B cell (primary cell): ENCODE measurements at regions of chr13 and their contacts with region 1.

Region 1: GRCh38 chr13:23810685-23811240 is 78.4 kb downstream of the MIPEP start:
- DNase-seq: peak; percentile 67
- ATAC-seq: peak; percentile 56
- H3K4me3 ChIP-seq: no peak overlapping the region
- H3K4me3 Mint-ChIP-seq: peak overlapping the region; percentile 23
- H3K27ac ChIP-seq: peak overlapping the region in 1 of 2 donors; percentile 50
- H3K27ac Mint-ChIP-seq: peak overlapping the region; percentile 43
- H3K4me1 ChIP-seq: peaks cover 54 to 59% of the 10 kb centered on the region in 2 donors
- H3K4me1 Mint-ChIP-seq: peaks cover 43% of the 10 kb centered on the region
- H3K27me3 ChIP-seq: peaks cover 0 to 2% (median 0%) of the 10 kb centered on the region in 4 experiments
- H3K27me3 Mint-ChIP-seq: no peaks in the 10 kb centered on the region
- CTCF ChIP-seq: peak; percentile 79

Region 2: DNA sequence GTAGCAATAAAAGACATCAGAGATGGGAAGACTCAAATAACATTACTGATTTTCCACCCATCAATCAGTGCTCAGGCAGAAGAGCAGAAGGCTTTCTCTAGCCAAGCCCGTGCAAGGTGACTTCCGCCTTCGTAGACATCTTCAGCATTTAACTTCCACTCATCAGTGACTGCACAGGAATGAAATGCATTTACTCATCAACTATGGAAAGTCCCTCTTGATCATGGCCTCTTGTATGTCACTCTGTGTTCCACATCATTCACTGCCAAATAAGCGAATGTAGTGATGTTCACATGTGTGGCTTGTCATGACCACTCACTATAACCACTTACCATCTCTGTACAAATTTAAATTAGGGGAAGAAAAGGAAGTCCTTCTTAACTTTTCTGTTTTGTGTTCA is 426.7 kb before region 1 on chr13:
- CTCF ChIA-PET with region 1: no interaction called
- POLR2A ChIA-PET with region 1: no interaction called
- intact Hi-C with region 1: loop called (anchors 1 kb)
- DNase-seq: peak; percentile 92
- ATAC-seq: peak; percentile 98
- H3K4me3 ChIP-seq: no peak overlapping the region
- H3K4me3 Mint-ChIP-seq: peak overlapping the region; percentile 40
- H3K27ac ChIP-seq: peak overlapping the region; percentile 37 to 68
- H3K27ac Mint-ChIP-seq: peak overlapping the region; percentile 76
- H3K4me1 ChIP-seq: peaks cover 30% of the 10 kb centered on the region in 2 donors
- H3K4me1 Mint-ChIP-seq: peaks cover 31% of the 10 kb centered on the region
- H3K27me3 ChIP-seq: peaks cover 0 to 4% (median 0%) of the 10 kb centered on the region in 4 experiments
- H3K27me3 Mint-ChIP-seq: peaks cover 4% of the 10 kb centered on the region
- CTCF ChIP-seq: no peak

Region 3: DNA sequence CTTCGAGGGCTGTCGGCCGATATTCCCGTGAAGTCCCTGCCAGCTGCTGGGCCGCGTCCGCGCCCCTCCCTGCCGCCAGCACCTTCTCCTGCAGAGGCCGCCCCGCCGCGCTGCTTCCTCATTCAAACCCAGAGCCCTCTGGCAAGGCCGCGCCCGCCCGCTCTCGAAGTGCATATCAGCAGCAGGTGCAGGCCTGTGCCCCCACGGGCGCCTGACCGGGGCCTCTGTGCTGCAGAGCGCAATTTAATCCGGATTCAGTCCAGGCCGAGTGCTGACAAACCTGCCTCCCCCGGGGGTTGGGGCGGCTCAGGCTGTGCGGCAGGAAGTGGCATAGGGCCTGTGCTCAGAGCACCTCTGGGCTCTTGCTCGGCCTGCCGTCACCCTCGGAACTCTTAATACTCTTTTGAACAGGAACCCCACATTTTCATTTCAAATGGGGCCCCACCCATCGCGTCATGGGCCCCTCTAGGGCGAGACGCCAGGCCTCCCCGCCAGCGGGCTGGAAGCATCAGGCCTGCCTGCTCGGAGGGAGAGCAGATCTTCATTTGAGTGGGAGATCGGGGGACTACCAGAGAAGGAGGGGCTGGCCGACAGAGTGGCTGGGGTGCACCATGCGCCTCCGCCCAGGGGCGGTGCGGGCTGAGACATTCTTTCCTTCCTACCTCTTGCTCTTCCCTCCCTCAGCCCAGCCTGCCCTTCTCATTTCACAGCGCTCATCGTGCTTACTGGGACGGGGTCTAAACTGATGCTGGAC is 114.9 kb before region 1 on chr13:
- CTCF ChIA-PET with region 1: no interaction called
- POLR2A ChIA-PET with region 1: no interaction called
- intact Hi-C with region 1: loop called (anchors 1 kb)
- DNase-seq: peak; percentile 77
- ATAC-seq: peak; percentile 96
- H3K4me3 ChIP-seq: peak overlapping the region in 4 of 5 experiments; percentile 24 to 53 (median 45)
- H3K4me3 Mint-ChIP-seq: peak overlapping the region; percentile 89
- H3K27ac ChIP-seq: peak overlapping the region; percentile 78 to 83
- H3K27ac Mint-ChIP-seq: peak overlapping the region; percentile 98
- H3K4me1 ChIP-seq: peaks cover 9 to 21% of the 10 kb centered on the region in 2 donors
- H3K4me1 Mint-ChIP-seq: peaks cover 19% of the 10 kb centered on the region
- H3K27me3 ChIP-seq: no peaks in the 10 kb centered on the region
- H3K27me3 Mint-ChIP-seq: no peaks in the 10 kb centered on the region
- CTCF ChIP-seq: no peak

Region 4: GRCh38 chr13:23776698-23777574 is 33.8 kb before region 1 on chr13:
- CTCF ChIA-PET with region 1: interaction called, 3 read pairs
- POLR2A ChIA-PET with region 1: no interaction called
- intact Hi-C with region 1: loop called (anchors 1 kb)
- DNase-seq: peak; percentile 64
- ATAC-seq: peak; percentile 97
- H3K4me3 ChIP-seq: peak overlapping the region in 1 of 5 experiments; percentile 17
- H3K4me3 Mint-ChIP-seq: peak overlapping the region; percentile 13
- H3K27ac ChIP-seq: no peak overlapping the region
- H3K27ac Mint-ChIP-seq: peak overlapping the region; percentile 3
- H3K4me1 ChIP-seq: peaks cover 14 to 36% of the 10 kb centered on the region in 2 donors
- H3K4me1 Mint-ChIP-seq: peaks cover 33% of the 10 kb centered on the region
- H3K27me3 ChIP-seq: peaks cover 0 to 37% (median 33%) of the 10 kb centered on the region in 4 experiments
- H3K27me3 Mint-ChIP-seq: peaks cover 57% of the 10 kb centered on the region
- CTCF ChIP-seq: no peak

Region 5: DNA sequence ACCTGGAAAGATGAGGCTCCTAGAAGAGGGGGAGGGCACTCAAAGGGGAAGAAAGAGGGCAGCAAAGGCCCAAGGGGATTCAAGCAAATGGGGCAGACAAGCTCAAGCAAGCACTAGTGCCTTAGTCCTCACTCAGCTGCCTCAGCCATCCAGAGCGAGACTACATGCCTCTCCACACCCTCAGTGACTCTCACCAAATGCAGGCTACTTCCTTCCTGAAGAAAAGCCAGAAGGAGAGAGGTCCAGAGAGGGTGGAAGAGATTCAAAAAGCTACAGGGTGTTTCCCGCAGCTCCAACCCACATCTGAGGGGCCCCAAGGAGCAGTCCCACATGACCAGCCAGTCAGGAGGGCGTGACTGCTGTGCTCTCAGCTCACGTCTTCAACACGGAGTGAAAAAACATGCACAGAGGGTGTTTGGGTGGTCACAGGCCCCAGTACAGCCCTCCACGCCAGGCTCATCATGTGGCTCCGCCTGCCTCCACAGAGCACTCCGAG is 37.9 kb after region 1 on chr13:
- CTCF ChIA-PET with region 1: interaction called, 21 read pairs
- POLR2A ChIA-PET with region 1: no interaction called
- intact Hi-C with region 1: loop called (anchors 2 kb)
- DNase-seq: peak; percentile 56
- ATAC-seq: peak; percentile 88
- H3K4me3 ChIP-seq: peak overlapping the region in 1 of 5 experiments; percentile 12
- H3K4me3 Mint-ChIP-seq: peak overlapping the region; percentile 50
- H3K27ac ChIP-seq: peak overlapping the region in 1 of 2 donors; percentile 36
- H3K27ac Mint-ChIP-seq: no peak overlapping the region
- H3K4me1 ChIP-seq: peaks cover 45 to 48% of the 10 kb centered on the region in 2 donors
- H3K4me1 Mint-ChIP-seq: peaks cover 50% of the 10 kb centered on the region
- H3K27me3 ChIP-seq: no peaks in the 10 kb centered on the region
- H3K27me3 Mint-ChIP-seq: no peaks in the 10 kb centered on the region
- CTCF ChIP-seq: no peak

Region 6: GRCh38 chr13:23888658-23889614 is 78.2 kb after region 1 on chr13 and contains the start of gene MIPEP:
- CTCF ChIA-PET with region 1: interaction called, 8 read pairs
- POLR2A ChIA-PET with region 1: no interaction called
- intact Hi-C with region 1: loop called (anchors 1 kb)
- DNase-seq: peak; percentile 92
- ATAC-seq: peak; percentile 93
- H3K4me3 ChIP-seq: peak within 1 kb of the TSS; percentile 24 to 96 (median 80)
- H3K4me3 Mint-ChIP-seq: peak within 1 kb of the TSS; percentile 94
- H3K27ac ChIP-seq: peak within 1 kb of the TSS; percentile 42 to 86
- H3K27ac Mint-ChIP-seq: peak within 1 kb of the TSS; percentile 95
- H3K4me1 ChIP-seq: peaks cover 12 to 17% of the 10 kb centered on the region in 2 donors
- H3K4me1 Mint-ChIP-seq: peaks cover 23% of the 10 kb centered on the region
- H3K27me3 ChIP-seq: no peaks in the 10 kb centered on the region
- H3K27me3 Mint-ChIP-seq: no peaks in the 10 kb centered on the region
- CTCF ChIP-seq: peak; percentile 69
- total RNA-seq, gene MIPEP: 15.7 and 16.9 TPM in 2 replicates

Region 7: DNA sequence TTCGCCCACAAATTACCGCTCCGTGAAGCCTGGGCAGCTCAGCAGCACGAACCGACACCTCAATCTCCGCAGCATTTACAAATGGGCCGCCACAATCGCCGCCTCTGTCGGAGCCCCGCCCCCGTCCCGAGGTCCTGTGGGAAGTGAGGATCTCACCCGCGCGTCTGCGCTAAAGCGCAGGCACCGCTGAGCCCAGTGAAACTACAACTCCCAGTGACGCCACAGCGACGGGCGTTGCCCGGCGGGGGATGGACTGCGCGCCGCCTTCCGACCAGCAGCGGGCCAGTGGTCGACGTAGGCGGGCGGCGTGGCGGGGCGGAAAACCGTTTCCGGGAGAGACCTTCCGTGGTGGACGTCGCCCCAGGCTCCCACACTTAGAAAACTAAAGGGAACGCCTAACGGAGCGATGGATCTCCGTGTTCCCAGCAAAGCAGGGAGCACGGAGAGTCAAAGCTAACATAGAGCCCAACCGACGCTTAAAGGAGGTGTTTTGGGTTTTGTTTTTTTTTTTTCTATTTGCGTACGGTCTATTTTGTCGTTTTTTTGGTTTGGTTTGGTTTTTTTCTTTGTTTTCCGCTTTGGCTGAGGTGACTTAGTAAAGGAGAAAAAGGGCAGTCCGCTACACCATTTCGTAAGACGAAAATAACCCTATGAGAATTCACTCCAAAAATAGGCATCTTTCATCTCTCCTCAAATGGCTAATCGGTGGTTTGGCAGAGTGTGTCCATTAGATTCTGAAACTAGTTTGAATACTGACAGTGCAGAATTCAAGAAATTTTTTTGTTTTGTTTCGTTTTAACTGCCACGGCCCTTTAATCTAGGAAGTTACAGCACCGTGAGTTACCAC is 1112.2 kb after region 1 on chr13:
- CTCF ChIA-PET with region 1: no interaction called
- POLR2A ChIA-PET with region 1: no interaction called
- intact Hi-C with region 1: loop called (anchors 2 kb)
- DNase-seq: peak; percentile 96
- ATAC-seq: peak; percentile 98
- H3K4me3 ChIP-seq: peak overlapping the region; percentile 94 to 96 (median 95)
- H3K4me3 Mint-ChIP-seq: peak overlapping the region; percentile 97
- H3K27ac ChIP-seq: peak overlapping the region; percentile 98
- H3K27ac Mint-ChIP-seq: peak overlapping the region; percentile 99
- H3K4me1 ChIP-seq: peaks cover 5 to 11% of the 10 kb centered on the region in 2 donors
- H3K4me1 Mint-ChIP-seq: peaks cover 15% of the 10 kb centered on the region
- H3K27me3 ChIP-seq: no peaks in the 10 kb centered on the region
- H3K27me3 Mint-ChIP-seq: no peaks in the 10 kb centered on the region
- CTCF ChIP-seq: peak; percentile 16